B cell (primary cell): ENCODE measurements at regions of chr11 and their contacts with region 1.

Region 1: GRCh38 chr11:43680521-43681400 is at the start of gene HSD17B12:
- DNase-seq: peak; percentile 99
- ATAC-seq: peak; percentile 96
- H3K4me3 ChIP-seq: peak within 1 kb of the TSS; percentile 78 to 92 (median 86)
- H3K4me3 Mint-ChIP-seq: peak within 1 kb of the TSS; percentile 88
- H3K27ac ChIP-seq: peak within 1 kb of the TSS; percentile 94 to 97
- H3K27ac Mint-ChIP-seq: peak within 1 kb of the TSS; percentile 95
- H3K4me1 ChIP-seq: peaks cover 14 to 23% of the 10 kb centered on the region in 2 donors
- H3K4me1 Mint-ChIP-seq: peaks cover 35% of the 10 kb centered on the region
- H3K27me3 ChIP-seq: peaks cover 0 to 4% (median 0%) of the 10 kb centered on the region in 4 experiments
- H3K27me3 Mint-ChIP-seq: no peaks in the 10 kb centered on the region
- CTCF ChIP-seq: no peak
- total RNA-seq, gene HSD17B12: 34.6 and 41.1 TPM in 2 replicates

Region 2: GRCh38 chr11:43643898-43644620 is 36.7 kb before region 1 on chr11:
- CTCF ChIA-PET with region 1: no interaction called
- POLR2A ChIA-PET with region 1: no interaction called
- intact Hi-C with region 1: loop called (anchors 1 kb)
- DNase-seq: peak; percentile 87
- ATAC-seq: peak; percentile 99
- H3K4me3 ChIP-seq: peak overlapping the region; percentile 67 to 94 (median 84)
- H3K4me3 Mint-ChIP-seq: peak overlapping the region; percentile 89
- H3K27ac ChIP-seq: peak overlapping the region; percentile 32 to 74
- H3K27ac Mint-ChIP-seq: peak overlapping the region; percentile 78
- H3K4me1 ChIP-seq: peaks cover 7 to 10% of the 10 kb centered on the region in 2 donors
- H3K4me1 Mint-ChIP-seq: peaks cover 22% of the 10 kb centered on the region
- H3K27me3 ChIP-seq: peaks cover 0 to 17% (median 8%) of the 10 kb centered on the region in 4 experiments
- H3K27me3 Mint-ChIP-seq: peaks cover 16% of the 10 kb centered on the region
- CTCF ChIP-seq: no peak

Region 3: DNA sequence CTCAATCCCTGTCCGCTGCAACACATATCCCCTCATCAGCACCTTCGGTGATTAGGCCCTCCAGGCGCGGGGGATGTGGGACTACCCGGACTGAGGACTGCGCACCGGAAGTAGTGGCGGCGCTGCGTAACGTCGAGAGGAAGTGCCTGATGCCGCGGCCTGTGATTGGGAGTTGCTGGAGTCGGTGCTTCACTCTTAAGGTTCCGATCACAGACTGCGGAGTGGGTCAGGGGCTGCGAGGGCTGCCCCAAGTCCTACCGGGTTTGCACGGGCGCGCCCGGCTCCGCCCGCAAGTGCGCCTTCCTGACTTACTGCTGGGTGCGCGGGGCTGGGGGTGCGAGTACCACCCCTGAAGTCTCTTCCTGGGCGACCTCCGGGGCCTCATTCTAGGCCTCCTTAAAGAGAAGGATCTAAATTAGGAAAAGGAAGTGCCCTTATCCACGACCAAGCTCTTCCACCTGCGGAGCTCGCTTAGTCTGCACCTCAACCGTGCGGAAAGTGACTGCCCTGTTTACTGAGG is 199.9 kb after region 1 on chr11 and contains the start of gene ALKBH3:
- CTCF ChIA-PET with region 1: no interaction called
- POLR2A ChIA-PET with region 1: no interaction called
- intact Hi-C with region 1: loop called (anchors 1 kb)
- DNase-seq: peak; percentile 93
- ATAC-seq: peak; percentile 99
- H3K4me3 ChIP-seq: peak within 1 kb of the TSS; percentile 54 to 96 (median 82)
- H3K4me3 Mint-ChIP-seq: peak within 1 kb of the TSS; percentile 95
- H3K27ac ChIP-seq: peak within 1 kb of the TSS; percentile 3 to 62
- H3K27ac Mint-ChIP-seq: peak within 1 kb of the TSS; percentile 82
- H3K4me1 ChIP-seq: peaks cover 14 to 15% of the 10 kb centered on the region in 2 donors
- H3K4me1 Mint-ChIP-seq: peaks cover 19% of the 10 kb centered on the region
- H3K27me3 ChIP-seq: peaks cover 0 to 26% (median 8%) of the 10 kb centered on the region in 4 experiments
- H3K27me3 Mint-ChIP-seq: peaks cover 26% of the 10 kb centered on the region
- CTCF ChIP-seq: no peak
- total RNA-seq, gene ALKBH3: 26.7 and 27.3 TPM in 2 replicates

Region 4: DNA sequence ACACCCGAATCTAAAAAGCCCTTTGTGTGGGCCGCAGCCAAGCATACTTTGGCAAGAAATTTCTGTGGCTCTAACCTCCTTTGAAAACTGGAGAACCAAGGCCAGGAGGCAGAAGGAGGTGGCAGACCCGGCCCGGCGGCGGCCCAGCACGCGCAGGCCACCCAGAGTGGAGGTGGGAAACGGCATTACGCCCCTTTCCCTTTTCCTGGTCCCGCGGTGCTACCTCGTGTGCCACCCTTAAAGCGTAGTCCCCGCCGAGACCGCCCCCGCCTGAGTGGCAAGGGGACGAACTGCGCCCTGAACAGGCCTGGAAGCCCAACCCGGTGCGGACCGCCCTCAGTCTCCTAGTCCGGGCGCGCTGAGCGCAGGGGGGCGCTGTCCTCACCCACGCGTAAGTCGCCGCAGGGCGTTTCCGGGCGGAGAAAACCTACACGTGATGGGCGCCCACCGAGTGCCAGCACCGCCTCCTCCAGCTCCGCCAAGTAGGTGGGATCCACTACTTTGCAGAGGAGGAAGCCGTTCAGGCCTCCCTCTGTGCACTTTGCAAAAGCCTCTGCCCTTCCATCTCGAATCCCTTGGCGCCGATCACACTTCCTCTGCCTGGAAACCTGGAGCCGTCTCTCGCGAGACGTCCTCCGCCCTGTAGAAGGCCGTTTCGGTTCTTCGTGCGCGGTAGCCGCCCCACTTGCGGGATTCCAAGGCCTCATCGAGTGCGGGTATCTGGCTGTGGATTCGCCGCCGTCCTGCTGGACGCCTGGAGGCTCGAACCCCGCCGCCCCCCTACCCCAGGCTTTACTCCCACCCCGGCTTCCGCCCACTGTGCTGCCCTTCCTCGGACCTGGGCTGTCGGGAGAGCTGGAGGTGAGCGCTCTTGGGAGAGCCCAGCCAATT is 385.3 kb after region 1 on chr11 and contains the start of gene ACCS:
- CTCF ChIA-PET with region 1: no interaction called
- POLR2A ChIA-PET with region 1: no interaction called
- intact Hi-C with region 1: loop called (anchors 2 kb)
- DNase-seq: peak; percentile 94
- ATAC-seq: peak; percentile 96
- H3K4me3 ChIP-seq: peak within 1 kb of the TSS; percentile 32 to 85 (median 81)
- H3K4me3 Mint-ChIP-seq: peak within 1 kb of the TSS; percentile 97
- H3K27ac ChIP-seq: peak within 1 kb of the TSS; percentile 71 to 77
- H3K27ac Mint-ChIP-seq: peak within 1 kb of the TSS; percentile 91
- H3K4me1 ChIP-seq: peaks cover 6 to 18% of the 10 kb centered on the region in 2 donors
- H3K4me1 Mint-ChIP-seq: peaks cover 22% of the 10 kb centered on the region
- H3K27me3 ChIP-seq: no peaks in the 10 kb centered on the region
- H3K27me3 Mint-ChIP-seq: no peaks in the 10 kb centered on the region
- CTCF ChIP-seq: peak; percentile 87
- total RNA-seq, gene ACCS: 56.2 and 59.5 TPM in 2 replicates